ENCODE measurements at regions of chr1 and their contacts with region 1.

Region 1: GRCh38 chr1:18949686-18950400 is 6.6 kb downstream of the IFFO2 start:
- DNase-seq: no peak
- H3K4me3 Mint-ChIP-seq: peak overlapping the region; percentile 89
- H3K27ac Mint-ChIP-seq: peak overlapping the region; percentile 99
- H3K4me1 Mint-ChIP-seq: peaks cover 95% of the 10 kb centered on the region
- H3K27me3 Mint-ChIP-seq: peaks cover 2% of the 10 kb centered on the region

Region 2: GRCh38 chr1:18913065-18913835 is 36.6 kb before region 1 on chr1:
- intact Hi-C with region 1: loop called (anchors 1 kb)
- DNase-seq: peak; percentile 62
- H3K4me3 Mint-ChIP-seq: no peak overlapping the region
- H3K27ac Mint-ChIP-seq: no peak overlapping the region
- H3K4me1 Mint-ChIP-seq: peaks cover 6% of the 10 kb centered on the region
- H3K27me3 Mint-ChIP-seq: no peaks in the 10 kb centered on the region

Region 3: DNA sequence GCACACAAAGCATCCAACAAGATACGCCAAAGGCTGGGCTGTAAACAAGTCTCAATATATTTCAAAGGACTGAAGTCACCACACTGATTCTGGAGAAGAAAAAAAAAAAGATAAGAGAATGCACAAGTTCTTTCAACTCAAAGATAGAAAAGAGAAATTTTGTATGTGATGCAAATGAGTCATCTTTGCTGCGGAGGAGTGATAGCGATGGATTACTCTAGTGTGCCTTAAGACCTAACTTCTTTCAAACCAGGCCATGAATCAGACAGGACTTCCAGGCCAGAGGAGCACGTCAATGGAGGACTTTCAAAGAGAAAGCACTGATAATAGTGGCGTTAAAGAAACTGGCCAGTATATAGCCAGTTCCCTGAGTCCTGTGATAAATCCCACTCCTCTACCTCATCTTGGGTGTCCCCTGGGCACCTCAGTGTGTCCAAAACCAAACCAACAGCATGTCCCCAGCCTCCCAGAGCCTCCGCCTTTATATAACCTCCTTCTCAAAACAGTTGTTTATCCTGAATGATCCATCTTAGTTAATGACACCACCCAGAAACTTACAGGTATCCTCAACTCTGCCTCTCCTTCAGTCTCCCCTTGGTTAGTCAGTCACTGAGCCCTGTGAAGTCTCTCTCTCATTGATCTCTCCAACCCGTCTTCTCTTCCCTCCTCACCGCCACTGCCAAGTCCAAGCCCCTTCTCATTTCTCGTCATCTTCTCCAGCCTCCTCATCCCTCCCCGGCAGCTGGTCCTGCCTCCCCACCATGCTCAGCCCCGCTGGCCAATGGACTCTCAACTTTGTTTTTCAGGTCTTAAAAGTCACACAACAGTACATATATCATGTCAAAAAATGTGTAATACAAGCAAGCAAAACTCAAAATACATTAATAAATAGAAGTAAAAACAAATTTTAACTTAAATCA is 53.8 kb after region 1 on chr1:
- intact Hi-C with region 1: loop called (anchors 1 kb)
- DNase-seq: no peak
- H3K4me3 Mint-ChIP-seq: no peak overlapping the region
- H3K27ac Mint-ChIP-seq: peak overlapping the region; percentile 59
- H3K4me1 Mint-ChIP-seq: peaks cover 19% of the 10 kb centered on the region
- H3K27me3 Mint-ChIP-seq: peaks cover 6% of the 10 kb centered on the region

Region 4: GRCh38 chr1:19010995-19011844 is 61.4 kb after region 1 on chr1:
- intact Hi-C with region 1: loop called (anchors 1 kb)
- DNase-seq: peak; percentile 75
- H3K4me3 Mint-ChIP-seq: peak overlapping the region; percentile 59
- H3K27ac Mint-ChIP-seq: peak overlapping the region; percentile 64
- H3K4me1 Mint-ChIP-seq: peaks cover 33% of the 10 kb centered on the region
- H3K27me3 Mint-ChIP-seq: peaks cover 15% of the 10 kb centered on the region

Region 5: GRCh38 chr1:19074902-19075721 is 125.3 kb after region 1 on chr1:
- intact Hi-C with region 1: loop called (anchors 2 kb)
- DNase-seq: no peak
- H3K4me3 Mint-ChIP-seq: peak overlapping the region; percentile 53
- H3K27ac Mint-ChIP-seq: peak overlapping the region; percentile 61
- H3K4me1 Mint-ChIP-seq: peaks cover 34% of the 10 kb centered on the region
- H3K27me3 Mint-ChIP-seq: peaks cover 4% of the 10 kb centered on the region

Measured in activated T-helper 1 cell treated with anti-CD3 and anti-CD28 coated beads, Interleukin-12 subunit alpha, Interleukin-12 subunit beta, Interleukin-2, Interleukin-4 antibody, amounts not matched to agents 30 ng/mL and 10 ng/mL and 1 ng/mL, durations not matched to agents 14 hours and 24 hours and 36 hours (primary cell).